ENCODE measurements at regions of chr14 and their contacts with region 1.

Region 1: DNA sequence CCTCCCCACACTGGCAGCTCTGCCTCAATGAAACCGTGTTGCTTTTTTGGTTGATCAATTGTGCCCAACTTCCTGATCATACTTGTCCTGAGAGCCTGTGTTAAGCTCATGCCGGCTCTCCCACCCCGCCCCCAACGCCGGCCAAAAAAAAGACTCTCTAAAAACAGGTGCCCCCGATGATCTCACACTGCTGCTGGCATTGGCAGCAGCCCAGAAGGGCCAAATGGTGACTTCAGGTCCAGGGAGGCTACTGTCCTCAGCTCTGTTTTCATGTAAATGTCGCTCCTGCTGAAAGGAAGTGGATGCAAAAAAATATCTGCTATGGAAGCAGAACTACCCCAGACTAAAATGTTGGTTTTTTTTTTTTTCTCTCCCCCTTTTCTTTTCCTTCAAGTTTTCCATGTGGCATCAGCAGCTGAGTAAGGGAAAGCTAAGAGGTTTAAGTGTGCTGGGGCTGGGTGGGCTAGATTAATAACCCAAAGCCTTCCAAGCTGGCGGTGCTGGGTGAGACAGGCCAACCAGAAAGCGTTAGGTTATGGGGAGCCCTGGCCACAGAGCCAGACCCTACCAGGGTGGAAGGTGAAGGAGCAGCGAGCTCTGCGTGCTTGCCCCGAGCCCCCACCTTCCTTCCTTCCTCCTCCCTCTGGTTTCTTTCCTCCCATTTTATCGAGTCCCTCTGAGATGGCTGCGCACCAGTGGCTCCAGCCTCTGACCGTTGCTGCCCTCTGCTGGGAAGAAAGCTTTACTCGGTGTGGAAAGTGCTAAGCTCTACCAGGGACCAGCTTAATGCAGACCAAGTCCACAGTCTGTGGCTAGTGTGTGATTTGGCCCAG is 396.1 kb downstream of the NRXN3 start:
- DNase-seq: peak in 8 of 9 donors; percentile 21 to 53 (median 26)
- ATAC-seq: peak; percentile 87
- H3K4me3 ChIP-seq: peak overlapping the region; percentile 26
- H3K4me3 Mint-ChIP-seq: peak overlapping the region in 9 of 10 donors; percentile 27 to 74 (median 53)
- H3K27ac ChIP-seq: no peak overlapping the region
- H3K27ac Mint-ChIP-seq: no peak overlapping the region
- H3K4me1 ChIP-seq: no peaks in the 10 kb centered on the region
- H3K4me1 Mint-ChIP-seq: peaks cover 0 to 11% (median 9%) of the 10 kb centered on the region in 7 donors
- H3K27me3 ChIP-seq: no peaks in the 10 kb centered on the region
- H3K27me3 Mint-ChIP-seq: peaks cover 0 to 4% (median 0%) of the 10 kb centered on the region in 5 donors

Region 2: DNA sequence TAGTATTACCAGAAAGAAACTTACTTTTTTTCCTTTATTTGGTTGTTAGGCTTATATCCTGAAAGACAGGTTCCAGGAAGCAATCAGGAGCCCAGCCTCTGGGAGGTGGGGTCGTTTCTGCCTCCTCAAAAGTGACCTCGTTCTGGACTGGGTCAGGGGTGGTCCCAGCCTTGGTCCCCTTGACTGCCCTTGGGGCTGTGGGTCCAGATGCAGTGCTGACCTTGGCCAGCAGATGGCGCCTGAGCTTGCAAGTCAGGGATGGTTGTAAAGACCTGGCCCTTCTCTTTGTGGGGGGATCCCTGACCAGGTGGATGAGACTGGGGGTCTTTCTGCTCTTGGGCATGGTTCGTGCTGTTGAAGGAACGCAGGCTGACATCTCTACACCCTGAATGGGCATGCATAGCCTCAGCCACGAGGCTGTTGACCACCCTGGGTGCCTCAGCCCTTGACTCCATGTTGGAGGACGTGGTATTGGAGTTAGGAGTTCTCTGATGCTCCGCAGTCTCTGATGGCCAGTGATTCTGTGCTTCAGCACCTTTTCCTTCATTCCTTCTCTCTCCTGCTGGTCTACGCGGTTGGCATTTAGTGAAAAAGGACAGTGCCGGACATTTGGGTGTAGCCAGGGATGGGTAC is 704.0 kb before region 1 on chr14:
- CTCF ChIA-PET with region 1: interaction called, 4 read pairs
- POLR2A ChIA-PET with region 1: no interaction called
- intact Hi-C with region 1: loop called in 1 of 2 experiments (anchors 2 kb)
- DNase-seq: peak; percentile 9 to 79 (median 48)
- ATAC-seq: peak; percentile 71
- H3K4me3 ChIP-seq: no peak overlapping the region
- H3K4me3 Mint-ChIP-seq: no peak overlapping the region
- H3K27ac ChIP-seq: no peak overlapping the region
- H3K27ac Mint-ChIP-seq: no peak overlapping the region
- H3K4me1 ChIP-seq: no peaks in the 10 kb centered on the region
- H3K4me1 Mint-ChIP-seq: peaks cover 0 to 5% (median 0%) of the 10 kb centered on the region in 7 donors
- H3K27me3 ChIP-seq: no peaks in the 10 kb centered on the region
- H3K27me3 Mint-ChIP-seq: no peaks in the 10 kb centered on the region

Region 3: GRCh38 chr14:78022059-78022458 is 544.2 kb before region 1 on chr14:
- CTCF ChIA-PET with region 1: no interaction called
- POLR2A ChIA-PET with region 1: no interaction called
- intact Hi-C with region 1: loop called in 1 of 2 experiments (anchors 2 kb)
- DNase-seq: peak in 3 of 9 donors; percentile 3 to 58 (median 7)
- ATAC-seq: peak; percentile 38
- H3K4me3 ChIP-seq: no peak overlapping the region
- H3K4me3 Mint-ChIP-seq: no peak overlapping the region
- H3K27ac ChIP-seq: no peak overlapping the region
- H3K27ac Mint-ChIP-seq: no peak overlapping the region
- H3K4me1 ChIP-seq: no peaks in the 10 kb centered on the region
- H3K4me1 Mint-ChIP-seq: peaks cover 0 to 3% (median 0%) of the 10 kb centered on the region in 7 donors
- H3K27me3 ChIP-seq: no peaks in the 10 kb centered on the region
- H3K27me3 Mint-ChIP-seq: peaks cover 15 to 34% (median 19%) of the 10 kb centered on the region in 5 donors

Region 4: GRCh38 chr14:78403278-78403815 is 162.9 kb before region 1 on chr14:
- CTCF ChIA-PET with region 1: no interaction called
- POLR2A ChIA-PET with region 1: no interaction called
- intact Hi-C with region 1: no loop called
- DNase-seq: no peak
- ATAC-seq: no peak
- H3K4me3 ChIP-seq: no peak overlapping the region
- H3K4me3 Mint-ChIP-seq: no peak overlapping the region
- H3K27ac ChIP-seq: no peak overlapping the region
- H3K27ac Mint-ChIP-seq: no peak overlapping the region
- H3K4me1 ChIP-seq: no peaks in the 10 kb centered on the region
- H3K4me1 Mint-ChIP-seq: peaks cover 0 to 4% (median 0%) of the 10 kb centered on the region in 7 donors
- H3K27me3 ChIP-seq: no peaks in the 10 kb centered on the region
- H3K27me3 Mint-ChIP-seq: peaks cover 0 to 32% (median 10%) of the 10 kb centered on the region in 5 donors

Region 5: GRCh38 chr14:78448164-78449094 is 117.8 kb before region 1 on chr14:
- CTCF ChIA-PET with region 1: no interaction called
- POLR2A ChIA-PET with region 1: no interaction called
- intact Hi-C with region 1: loop called in 1 of 2 experiments (anchors 2 kb)
- DNase-seq: peak in 2 of 9 donors; percentile 4 to 42
- ATAC-seq: no peak
- H3K4me3 ChIP-seq: no peak overlapping the region
- H3K4me3 Mint-ChIP-seq: no peak overlapping the region
- H3K27ac ChIP-seq: no peak overlapping the region
- H3K27ac Mint-ChIP-seq: no peak overlapping the region
- H3K4me1 ChIP-seq: no peaks in the 10 kb centered on the region
- H3K4me1 Mint-ChIP-seq: no peaks in the 10 kb centered on the region
- H3K27me3 ChIP-seq: no peaks in the 10 kb centered on the region
- H3K27me3 Mint-ChIP-seq: peaks cover 0 to 19% (median 3%) of the 10 kb centered on the region in 5 donors

Region 6: DNA sequence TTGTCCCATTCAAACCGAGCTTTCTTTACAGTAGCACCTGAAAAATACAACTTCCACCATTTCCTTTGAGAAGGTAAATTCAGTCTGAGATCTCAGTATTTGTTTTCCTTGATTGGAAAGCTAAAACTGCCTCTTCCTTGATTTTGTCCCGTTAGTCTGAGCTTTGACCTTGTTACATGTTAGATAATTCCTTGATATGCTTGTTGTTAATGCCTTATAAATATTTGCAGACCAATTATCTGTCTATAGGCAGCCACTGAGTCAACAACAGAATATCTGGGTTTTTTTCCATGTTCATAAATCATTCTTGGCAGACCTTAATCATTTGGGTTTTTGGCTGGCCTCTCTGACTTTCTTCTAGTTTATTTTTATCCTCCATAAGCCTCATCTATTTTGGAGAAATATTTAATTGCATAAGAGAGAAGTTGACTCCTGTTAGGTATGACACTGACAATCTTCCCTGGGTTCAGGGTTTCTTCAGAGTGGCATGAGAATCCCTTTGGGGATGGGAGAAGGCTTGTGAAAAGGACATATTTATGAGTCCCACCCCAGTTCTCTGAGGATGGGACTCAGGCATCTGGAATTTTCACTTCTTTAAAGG is 96.4 kb before region 1 on chr14:
- CTCF ChIA-PET with region 1: no interaction called
- POLR2A ChIA-PET with region 1: no interaction called
- intact Hi-C with region 1: no loop called
- DNase-seq: no peak
- ATAC-seq: no peak
- H3K4me3 ChIP-seq: no peak overlapping the region
- H3K4me3 Mint-ChIP-seq: no peak overlapping the region
- H3K27ac ChIP-seq: no peak overlapping the region
- H3K27ac Mint-ChIP-seq: no peak overlapping the region
- H3K4me1 ChIP-seq: no peaks in the 10 kb centered on the region
- H3K4me1 Mint-ChIP-seq: no peaks in the 10 kb centered on the region
- H3K27me3 ChIP-seq: no peaks in the 10 kb centered on the region
- H3K27me3 Mint-ChIP-seq: peaks cover 0 to 10% (median 5%) of the 10 kb centered on the region in 5 donors